ENCODE measurements at regions of chr6 and their contacts with region 1.

Region 1: GRCh38 chr6:145704143-145704781 is 31.1 kb downstream of the EPM2A start:
- H3K4me3 ChIP-seq: no peak overlapping the region
- H3K27ac ChIP-seq: no peak overlapping the region
- H3K4me1 ChIP-seq: no peaks in the 10 kb centered on the region
- CTCF ChIP-seq: no peak

Region 2: GRCh38 chr6:145633981-145634627 is 70.2 kb before region 1 on chr6:
- CTCF ChIA-PET with region 1: interaction called, 12 read pairs
- POLR2A ChIA-PET with region 1: no interaction called
- H3K4me3 ChIP-seq: no peak overlapping the region
- H3K27ac ChIP-seq: no peak overlapping the region
- H3K4me1 ChIP-seq: peaks cover 10% of the 10 kb centered on the region; the same call in 1 of the 2 replicates
- CTCF ChIP-seq: peak; percentile 89

Region 3: DNA sequence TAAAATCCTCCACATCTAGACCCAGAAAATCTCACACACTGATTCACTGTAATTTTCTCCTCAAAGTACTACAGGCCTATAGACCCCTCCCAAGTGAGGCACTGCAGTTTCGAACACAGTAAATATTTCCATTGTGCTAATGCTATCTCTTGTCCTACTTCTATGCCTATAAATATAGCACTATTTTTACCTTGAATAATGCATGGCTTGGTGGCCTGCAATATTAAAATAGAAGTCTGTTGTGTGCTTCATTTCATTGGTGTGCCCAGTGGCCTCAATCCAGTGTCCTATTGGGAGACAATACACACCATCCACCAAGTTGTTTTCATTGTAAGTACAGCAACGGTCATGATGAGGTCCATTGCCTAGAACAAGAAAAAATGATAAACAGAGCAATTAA is 18.3 kb before region 1 on chr6:
- CTCF ChIA-PET with region 1: interaction called, 10 read pairs
- POLR2A ChIA-PET with region 1: no interaction called
- H3K4me3 ChIP-seq: no peak overlapping the region
- H3K27ac ChIP-seq: no peak overlapping the region
- H3K4me1 ChIP-seq: no peaks in the 10 kb centered on the region
- CTCF ChIP-seq: no peak

Region 4: GRCh38 chr6:145694083-145694737 is 10.1 kb before region 1 on chr6:
- CTCF ChIA-PET with region 1: interaction called, 18 read pairs
- POLR2A ChIA-PET with region 1: no interaction called
- H3K4me3 ChIP-seq: no peak overlapping the region
- H3K27ac ChIP-seq: no peak overlapping the region
- H3K4me1 ChIP-seq: no peaks in the 10 kb centered on the region
- CTCF ChIP-seq: no peak

Region 5: DNA sequence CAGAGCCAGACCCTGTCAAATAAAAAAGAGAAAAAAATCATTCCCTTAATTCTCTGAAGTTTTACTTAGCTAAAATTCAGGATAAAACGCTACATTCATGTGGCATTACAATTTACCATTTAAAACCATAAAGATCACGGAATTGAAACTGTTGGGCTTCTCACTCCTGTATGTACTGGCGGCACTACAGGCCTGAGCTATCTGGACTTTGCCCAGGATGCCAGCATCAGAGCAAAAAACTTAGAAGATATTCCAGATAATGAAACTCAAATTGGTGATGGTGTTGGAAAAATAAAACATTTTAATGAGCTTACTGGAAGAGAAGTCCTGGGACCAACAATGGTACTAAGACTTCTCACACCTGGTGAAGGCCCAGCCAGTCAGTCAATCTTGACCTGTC is 16.9 kb after region 1 on chr6:
- CTCF ChIA-PET with region 1: interaction called, 11 read pairs
- POLR2A ChIA-PET with region 1: no interaction called
- H3K4me3 ChIP-seq: no peak overlapping the region
- H3K27ac ChIP-seq: no peak overlapping the region
- H3K4me1 ChIP-seq: no peaks in the 10 kb centered on the region
- CTCF ChIP-seq: no peak